Activated B cell treated with CpG ODN at 0.5 μM for 24 hours (primary cell): ENCODE measurements at regions of chr20 and their contacts with region 1.

Region 1: DNA sequence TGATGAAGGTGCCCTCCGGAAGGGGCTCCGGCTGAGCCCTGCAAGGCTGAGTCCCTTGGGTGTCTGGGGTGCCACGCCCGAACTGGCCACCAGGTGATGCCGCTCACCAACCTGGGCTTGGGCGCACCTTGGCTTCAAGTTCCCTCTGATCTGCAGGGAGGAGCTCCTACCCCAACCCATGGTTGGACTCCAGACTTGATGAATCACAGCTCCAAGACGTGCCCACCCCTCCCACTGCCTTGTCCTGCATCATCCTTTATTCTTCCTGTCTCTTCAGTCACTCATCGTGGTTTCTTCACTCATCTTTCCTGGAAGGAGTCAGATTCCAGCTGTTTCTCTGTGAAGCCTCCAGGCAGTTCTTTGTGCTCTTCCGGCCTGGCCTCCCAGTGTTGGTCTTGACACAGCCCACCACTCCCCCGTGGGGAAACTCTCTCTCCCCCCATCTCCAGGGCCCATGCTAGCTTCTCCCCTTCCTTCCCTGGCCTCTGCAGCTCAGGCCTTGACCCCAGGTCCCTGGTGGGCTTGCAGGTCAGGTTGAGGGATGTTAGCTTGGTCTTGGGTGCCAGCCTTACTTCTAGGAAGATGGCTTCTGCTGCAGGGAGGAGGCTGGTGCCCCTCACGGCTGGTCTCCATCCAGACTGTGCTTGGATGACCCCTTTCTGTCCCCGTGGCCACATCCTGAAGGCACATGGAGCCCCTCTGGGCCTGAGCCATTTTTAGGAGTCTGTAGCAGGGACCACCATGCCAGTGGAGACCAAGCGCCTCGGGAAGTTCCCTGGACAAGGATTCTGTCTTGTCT is 2.6 kb upstream of the ZBP1 start:
- DNase-seq: peak; percentile 47
- ATAC-seq: no peak
- H3K4me3 Mint-ChIP-seq: no peak overlapping the region
- H3K27ac Mint-ChIP-seq: peak overlapping the region; percentile 31
- H3K4me1 Mint-ChIP-seq: peaks cover 66% of the 10 kb centered on the region
- H3K27me3 Mint-ChIP-seq: no peaks in the 10 kb centered on the region
- CTCF ChIP-seq: peak; percentile 57

Region 2: DNA sequence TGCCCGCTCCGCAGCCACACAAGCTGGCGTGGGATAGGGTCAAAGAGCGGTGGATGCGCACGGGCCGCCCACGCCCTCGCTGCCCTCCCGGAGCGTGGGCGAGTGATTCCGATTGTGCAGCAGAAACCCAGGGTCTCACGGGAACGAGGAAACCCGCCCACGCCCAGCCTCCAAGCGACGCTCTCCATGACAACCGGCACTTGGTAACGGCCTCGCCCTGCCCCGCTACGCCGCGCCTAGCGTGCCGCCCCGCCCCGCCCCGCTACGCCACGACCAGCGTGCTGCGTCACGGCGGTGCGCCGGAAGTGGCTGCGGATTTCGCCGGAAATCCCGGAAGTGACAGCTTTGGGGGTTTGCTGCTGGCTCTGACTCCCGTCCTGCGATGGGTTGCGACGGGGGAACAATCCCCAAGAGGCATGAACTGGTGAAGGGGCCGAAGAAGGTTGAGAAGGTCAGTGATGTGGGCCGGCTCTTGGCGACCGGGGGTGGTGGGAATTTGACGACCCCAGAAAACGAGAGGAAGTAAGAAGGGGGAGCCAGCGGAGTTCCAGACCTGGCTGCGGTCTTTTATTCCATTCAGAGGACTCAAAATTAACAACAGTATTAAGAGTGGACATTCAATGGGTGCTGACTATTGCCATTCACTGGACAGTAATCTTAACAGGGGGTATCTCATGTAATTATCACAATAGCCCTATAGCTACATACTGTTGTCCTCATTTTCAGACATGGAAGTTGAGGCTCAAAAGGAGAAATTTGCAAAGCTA is 1154.3 kb before region 1 on chr20 and contains the start of gene RTF2:
- CTCF ChIA-PET with region 1: no interaction called
- POLR2A ChIA-PET with region 1: no interaction called
- intact Hi-C with region 1: loop called (anchors 5 kb)
- DNase-seq: peak; percentile 99
- ATAC-seq: peak; percentile 93
- H3K4me3 Mint-ChIP-seq: peak within 1 kb of the TSS; percentile 100
- H3K27ac Mint-ChIP-seq: peak within 1 kb of the TSS; percentile 99
- H3K4me1 Mint-ChIP-seq: peaks cover 44% of the 10 kb centered on the region
- H3K27me3 Mint-ChIP-seq: no peaks in the 10 kb centered on the region
- CTCF ChIP-seq: no peak
- total RNA-seq, gene RTF2: 81.0 and 81.1 TPM in 2 replicates

Region 3: DNA sequence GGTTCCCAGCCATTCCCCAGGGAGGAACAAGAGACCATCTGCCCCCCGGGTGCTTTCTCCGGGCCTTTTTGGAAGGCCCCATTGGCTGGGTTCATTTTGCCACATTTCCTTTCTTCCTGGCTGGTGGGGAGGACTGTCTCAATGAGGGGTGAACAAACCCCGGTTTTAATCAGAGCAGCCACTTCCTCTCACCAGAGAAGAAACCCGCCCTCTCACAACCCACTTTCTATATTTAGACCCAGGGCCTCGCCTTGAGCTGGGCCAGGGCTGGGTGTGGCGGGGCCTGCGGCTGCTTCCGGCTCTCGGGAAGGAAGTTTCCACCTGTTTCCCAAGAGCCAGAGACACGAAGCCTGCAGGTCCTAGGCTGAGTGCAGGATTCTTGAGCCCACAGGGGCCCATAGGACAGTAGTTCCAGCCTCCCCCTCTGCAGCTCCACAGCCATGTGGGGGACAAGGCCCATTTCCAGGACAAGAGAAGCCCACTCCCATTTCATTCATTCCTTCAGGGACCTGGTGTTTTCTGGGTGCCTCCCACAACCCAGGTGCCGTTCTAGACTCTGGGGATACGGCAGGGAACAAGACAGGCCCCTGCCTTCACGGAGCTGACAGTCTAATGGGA is 189.8 kb before region 1 on chr20:
- CTCF ChIA-PET with region 1: no interaction called
- POLR2A ChIA-PET with region 1: no interaction called
- intact Hi-C with region 1: loop called (anchors 1 kb)
- DNase-seq: peak; percentile 53
- ATAC-seq: peak; percentile 75
- H3K4me3 Mint-ChIP-seq: peak overlapping the region; percentile 59
- H3K27ac Mint-ChIP-seq: peak overlapping the region; percentile 84
- H3K4me1 Mint-ChIP-seq: peaks cover 79% of the 10 kb centered on the region
- H3K27me3 Mint-ChIP-seq: no peaks in the 10 kb centered on the region
- CTCF ChIP-seq: no peak

Region 4: DNA sequence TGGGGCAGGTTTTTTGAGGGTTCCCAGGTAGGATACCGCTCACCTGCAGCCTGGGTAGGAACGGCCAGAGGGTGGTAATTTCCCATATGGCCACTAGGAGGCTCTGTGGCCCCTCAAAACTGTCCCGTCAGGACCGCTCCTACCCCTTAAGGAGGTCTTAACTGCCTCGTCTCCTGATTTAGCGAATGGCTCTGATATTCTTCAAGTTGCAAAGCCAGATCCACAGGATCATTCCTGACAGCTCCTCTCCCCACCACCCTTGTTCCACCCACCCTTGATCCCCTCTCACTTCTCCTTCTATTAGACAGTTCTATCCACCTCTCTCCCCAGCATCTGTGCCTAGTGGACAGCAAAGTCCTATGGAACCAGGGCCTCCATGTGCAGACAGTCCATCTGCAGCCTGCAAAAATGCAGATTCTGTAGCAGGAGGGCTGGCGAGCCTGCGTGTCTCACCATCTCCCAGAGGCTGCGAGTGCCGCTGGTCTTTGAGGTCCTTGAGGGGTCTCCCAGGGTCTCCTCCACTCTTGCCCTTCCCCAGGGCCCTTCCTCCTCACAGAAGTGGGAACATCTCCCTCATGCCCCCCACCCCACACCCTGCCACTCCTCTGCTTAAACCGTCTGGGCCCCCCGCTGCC is 31.7 kb after region 1 on chr20:
- CTCF ChIA-PET with region 1: interaction called, 30 read pairs
- POLR2A ChIA-PET with region 1: interaction called, 6 read pairs
- intact Hi-C with region 1: loop called (anchors 1 kb)
- DNase-seq: peak; percentile 55
- ATAC-seq: peak; percentile 96
- H3K4me3 Mint-ChIP-seq: no peak overlapping the region
- H3K27ac Mint-ChIP-seq: peak overlapping the region; percentile 52
- H3K4me1 Mint-ChIP-seq: peaks cover 29% of the 10 kb centered on the region
- H3K27me3 Mint-ChIP-seq: no peaks in the 10 kb centered on the region
- CTCF ChIP-seq: peak; percentile 93

Region 5: GRCh38 chr20:57709931-57710799 is 87.4 kb after region 1 on chr20 and contains the start of gene PMEPA1:
- CTCF ChIA-PET with region 1: interaction called, 4 read pairs
- POLR2A ChIA-PET with region 1: interaction called, 46 read pairs
- intact Hi-C with region 1: loop called (anchors 1 kb)
- DNase-seq: peak; percentile 95
- ATAC-seq: peak; percentile 86
- H3K4me3 Mint-ChIP-seq: peak within 1 kb of the TSS; percentile 99
- H3K27ac Mint-ChIP-seq: peak within 1 kb of the TSS; percentile 92
- H3K4me1 Mint-ChIP-seq: peaks cover 59% of the 10 kb centered on the region
- H3K27me3 Mint-ChIP-seq: no peaks in the 10 kb centered on the region
- CTCF ChIP-seq: no peak
- total RNA-seq, gene PMEPA1: 33.1 and 34.8 TPM in 2 replicates

Region 6: DNA sequence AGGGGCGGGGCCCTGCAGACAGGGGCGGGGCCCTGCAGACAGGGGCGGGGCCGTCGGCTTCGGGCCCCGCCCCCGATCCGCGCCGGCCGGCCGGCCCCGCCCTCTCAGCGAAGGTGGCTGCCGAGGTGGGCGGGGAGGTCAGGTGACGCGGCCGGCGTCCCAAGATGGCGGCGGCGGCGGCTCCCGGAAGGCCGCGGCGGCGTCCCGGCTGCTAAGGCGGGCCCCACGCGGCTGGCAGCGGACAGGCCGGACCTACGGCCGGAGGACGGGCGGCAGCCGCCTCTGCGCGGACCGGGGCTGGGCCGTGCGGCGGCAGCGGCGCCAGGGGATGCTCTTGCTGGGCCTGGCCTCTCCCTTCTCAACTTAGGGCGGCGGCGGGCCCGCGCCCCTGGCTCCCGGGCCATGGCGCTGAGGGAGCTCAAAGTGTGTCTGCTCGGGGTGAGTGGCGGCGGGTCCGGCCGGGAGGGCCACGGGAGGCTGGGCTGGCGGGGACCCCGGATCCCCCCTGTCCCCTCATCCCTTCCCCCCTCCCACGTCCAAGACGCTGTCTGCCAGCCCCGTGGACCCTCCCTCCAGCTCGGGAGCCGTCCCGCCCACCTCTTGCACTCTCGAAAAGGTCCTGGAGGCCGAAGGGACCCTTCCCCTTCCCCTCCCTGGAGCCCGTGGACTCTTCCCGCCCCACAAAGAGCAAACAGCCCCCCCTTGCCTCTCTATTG is 687.0 kb after region 1 on chr20 and contains the start of gene RAB22A:
- CTCF ChIA-PET with region 1: no interaction called
- POLR2A ChIA-PET with region 1: interaction called, 7 read pairs
- intact Hi-C with region 1: loop called (anchors 1 kb)
- DNase-seq: peak; percentile 85
- ATAC-seq: peak; percentile 61
- H3K4me3 Mint-ChIP-seq: peak within 1 kb of the TSS; percentile 94
- H3K27ac Mint-ChIP-seq: peak within 1 kb of the TSS; percentile 94
- H3K4me1 Mint-ChIP-seq: peaks cover 58% of the 10 kb centered on the region
- H3K27me3 Mint-ChIP-seq: no peaks in the 10 kb centered on the region
- CTCF ChIP-seq: no peak
- total RNA-seq, gene RAB22A: 14.4 and 15.7 TPM in 2 replicates

Region 7: DNA sequence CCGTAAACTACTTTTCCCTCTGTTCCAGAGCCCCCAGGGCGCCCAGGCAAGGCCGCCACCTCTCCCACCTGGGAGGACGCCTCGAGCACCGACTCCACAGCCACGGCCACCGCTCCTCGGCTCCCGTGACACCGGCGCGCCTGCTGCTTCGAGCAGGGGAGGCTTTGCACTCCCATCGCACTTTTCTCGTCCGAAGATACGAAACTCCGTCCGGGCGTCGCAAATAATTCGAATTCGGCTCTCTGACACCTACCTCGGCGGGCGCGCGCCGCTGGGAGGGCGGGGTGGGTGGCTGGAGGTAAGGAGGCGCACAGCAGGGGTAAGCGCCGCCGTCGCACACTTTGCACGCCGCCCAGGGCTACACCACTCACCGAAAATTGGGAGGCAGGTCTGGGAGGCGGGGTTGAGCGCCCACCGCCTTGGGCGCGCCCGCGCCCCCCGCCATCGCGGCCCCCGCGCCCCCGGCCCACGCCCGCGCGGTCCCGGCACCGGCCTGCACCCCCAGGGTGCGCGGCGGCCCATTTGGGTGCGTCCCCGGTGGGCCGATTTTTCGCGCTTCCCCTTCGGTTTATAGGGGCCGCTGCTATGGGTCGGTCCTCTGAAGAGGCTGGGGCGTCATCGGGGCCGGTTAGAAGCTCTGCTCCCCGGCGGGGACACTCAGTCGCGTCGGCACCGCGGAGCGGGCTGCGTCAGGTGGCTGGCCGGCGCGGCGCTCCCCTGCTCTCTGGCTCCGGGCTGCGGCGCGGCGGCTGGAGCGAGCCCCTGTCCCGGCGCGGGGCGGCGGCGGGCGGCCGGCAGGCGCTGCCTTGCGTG is 1265.9 kb after region 1 on chr20:
- CTCF ChIA-PET with region 1: no interaction called
- POLR2A ChIA-PET with region 1: no interaction called
- intact Hi-C with region 1: loop called (anchors 5 kb)
- DNase-seq: peak; percentile 73
- ATAC-seq: peak; percentile 45
- H3K4me3 Mint-ChIP-seq: peak overlapping the region; percentile 84
- H3K27ac Mint-ChIP-seq: peak overlapping the region; percentile 59
- H3K4me1 Mint-ChIP-seq: peaks cover 27% of the 10 kb centered on the region
- H3K27me3 Mint-ChIP-seq: no peaks in the 10 kb centered on the region
- CTCF ChIP-seq: no peak